GM12878 (cell line): ENCODE measurements at regions of chr1 and their contacts with region 1.

Region 1: GRCh38 chr1:156625436-156626078 is 6.3 kb downstream of the HAPLN2 start:
- DNase-seq: no peak
- ATAC-seq: peak; percentile 78
- H3K4me3 ChIP-seq: no peak overlapping the region
- H3K27ac ChIP-seq: no peak overlapping the region
- H3K4me1 ChIP-seq: no peaks in the 10 kb centered on the region
- H3K27me3 ChIP-seq: peaks cover 10 to 20% of the 10 kb centered on the region in 2 experiments
- CTCF ChIP-seq: peak; percentile 75 to 93 (median 80)
- EP300 ChIP-seq: no peak
- POLR2A ChIP-seq: no peak
- RAD21 ChIP-seq: peak; percentile 64

Region 2: GRCh38 chr1:156641761-156642264 is 16.3 kb after region 1 on chr1 and contains the start of gene BCAN:
- CTCF ChIA-PET with region 1: interaction called, 26 read pairs
- POLR2A ChIA-PET with region 1: interaction called, 5 read pairs
- RAD21 ChIA-PET with region 1: interaction called, 3 read pairs
- SMC1A ChIA-PET with region 1: interaction called, 8 read pairs
- in situ Hi-C with region 1: no loop called
- intact Hi-C with region 1: no loop called
- DNase-seq: no peak
- ATAC-seq: peak; percentile 37
- H3K4me3 ChIP-seq: no peak within 1 kb of the TSS
- H3K27ac ChIP-seq: no peak within 1 kb of the TSS
- H3K4me1 ChIP-seq: peaks cover 8% of the 10 kb centered on the region
- H3K27me3 ChIP-seq: peaks cover 0 to 2% of the 10 kb centered on the region in 2 experiments
- CTCF ChIP-seq: no peak
- EP300 ChIP-seq: no peak
- POLR2A ChIP-seq: no peak
- RAD21 ChIP-seq: no peak
- polyA plus RNA-seq, gene BCAN: 0.05 to 0.06 TPM

Region 3: DNA sequence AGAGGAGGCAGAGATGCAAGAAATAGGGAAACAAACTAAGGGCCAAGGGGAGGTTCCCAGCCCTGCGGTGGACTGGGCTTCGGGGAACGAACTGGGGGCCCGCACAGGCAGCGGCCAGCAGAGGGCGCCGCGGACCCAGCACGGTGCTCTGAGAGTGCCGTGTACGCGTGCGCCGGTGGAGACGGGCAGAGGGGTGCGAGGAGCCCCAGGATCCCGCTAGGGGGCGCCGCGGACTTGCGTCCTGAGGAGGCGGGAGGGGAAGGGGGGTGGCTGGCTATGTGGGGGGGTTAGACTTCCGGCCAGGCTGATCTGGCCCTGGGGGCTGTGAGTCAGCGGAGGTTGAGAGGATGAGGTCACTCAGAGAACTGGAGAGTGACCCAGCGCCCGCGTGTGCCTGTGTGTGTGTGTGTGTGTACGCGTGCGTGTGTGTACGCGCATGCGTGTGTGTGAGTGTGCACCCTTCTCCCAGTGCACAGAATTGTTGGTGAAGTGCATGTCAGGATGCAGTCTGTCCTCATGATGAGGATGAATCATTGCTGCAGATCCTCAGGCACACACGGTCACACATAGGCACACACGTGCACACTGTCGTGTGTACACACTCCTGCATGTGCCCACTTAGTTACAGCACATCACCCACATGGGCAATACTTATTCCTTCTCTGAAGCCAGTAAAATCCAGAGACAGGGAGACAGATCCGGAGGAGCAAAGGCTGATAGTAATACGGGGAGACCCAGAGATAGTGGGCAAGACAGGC is 34.6 kb after region 1 on chr1:
- CTCF ChIA-PET with region 1: interaction called, 208 read pairs
- POLR2A ChIA-PET with region 1: interaction called, 3 read pairs
- RAD21 ChIA-PET with region 1: interaction called, 20 read pairs
- SMC1A ChIA-PET with region 1: interaction called, 18 read pairs
- in situ Hi-C with region 1: no loop called
- intact Hi-C with region 1: loop called (anchors 1 kb)
- DNase-seq: peak; percentile 70
- ATAC-seq: peak; percentile 84
- H3K4me3 ChIP-seq: peak overlapping the region; percentile 94
- H3K27ac ChIP-seq: peak overlapping the region; percentile 90
- H3K4me1 ChIP-seq: peaks cover 74% of the 10 kb centered on the region
- H3K27me3 ChIP-seq: 0 out of 4 replicates have a peak, but pooled peaks cover 0 to 2% of the 10 kb centered on the region in 2 experiments
- CTCF ChIP-seq: peak; percentile 99 to 100 (median 100); a peak in 5 of 6 replicates
- EP300 ChIP-seq: no peak
- POLR2A ChIP-seq: peak; percentile 69
- RAD21 ChIP-seq: peak; percentile 81

Region 4: DNA sequence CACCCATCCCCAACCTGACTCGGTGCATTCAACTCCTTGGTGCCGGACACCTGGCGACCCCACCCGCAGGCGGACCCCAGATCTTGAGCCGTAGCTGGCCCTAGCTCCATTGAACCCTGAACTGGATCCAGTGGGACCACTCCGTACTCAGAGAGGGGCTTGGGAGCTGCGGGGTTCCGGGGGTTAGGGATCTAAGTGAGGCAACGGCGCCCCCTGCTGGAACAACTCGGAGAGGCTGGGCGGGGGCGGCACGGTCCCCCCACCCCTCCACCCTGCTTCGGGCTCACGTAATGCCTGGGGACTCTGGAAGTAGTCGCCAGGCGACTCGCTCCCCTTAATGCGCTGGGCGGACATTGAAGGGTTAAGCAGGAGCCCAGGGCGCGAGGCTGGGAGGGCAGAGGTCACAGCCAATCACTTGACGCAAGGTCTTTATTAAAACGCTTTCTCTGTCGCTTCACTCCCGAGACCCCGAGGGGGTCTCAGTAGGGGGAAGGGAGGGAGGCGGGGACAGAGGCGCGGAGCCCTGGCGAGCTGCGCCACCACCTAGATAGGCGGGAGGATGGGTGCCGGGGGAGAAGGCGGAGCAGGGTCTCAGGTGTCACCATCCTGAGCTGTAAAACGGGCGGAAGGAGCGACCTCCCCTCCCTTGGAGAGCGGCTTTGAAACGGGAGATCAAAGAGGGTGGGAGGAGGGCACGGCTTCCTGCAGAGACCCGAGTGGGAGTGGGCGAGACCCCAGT is 80.5 kb after region 1 on chr1:
- CTCF ChIA-PET with region 1: interaction called, 24 read pairs
- POLR2A ChIA-PET with region 1: no interaction called
- RAD21 ChIA-PET with region 1: interaction called, 5 read pairs
- SMC1A ChIA-PET with region 1: no interaction called
- in situ Hi-C with region 1: no loop called
- intact Hi-C with region 1: no loop called
- DNase-seq: no peak
- ATAC-seq: peak; percentile 81
- H3K4me3 ChIP-seq: peak overlapping the region; percentile 35; the same call in 1 of the 2 replicates
- H3K27ac ChIP-seq: no peak overlapping the region
- H3K4me1 ChIP-seq: peaks cover 6% of the 10 kb centered on the region
- H3K27me3 ChIP-seq: peaks cover 10 to 15% of the 10 kb centered on the region in 2 experiments
- CTCF ChIP-seq: peak; percentile 60 to 74 (median 67)
- EP300 ChIP-seq: no peak
- POLR2A ChIP-seq: peak; percentile 11; the same call in 1 of the 2 replicates
- RAD21 ChIP-seq: peak; percentile 53